ENCODE measurements at regions of chr17 and their contacts with region 1.

Region 1: DNA sequence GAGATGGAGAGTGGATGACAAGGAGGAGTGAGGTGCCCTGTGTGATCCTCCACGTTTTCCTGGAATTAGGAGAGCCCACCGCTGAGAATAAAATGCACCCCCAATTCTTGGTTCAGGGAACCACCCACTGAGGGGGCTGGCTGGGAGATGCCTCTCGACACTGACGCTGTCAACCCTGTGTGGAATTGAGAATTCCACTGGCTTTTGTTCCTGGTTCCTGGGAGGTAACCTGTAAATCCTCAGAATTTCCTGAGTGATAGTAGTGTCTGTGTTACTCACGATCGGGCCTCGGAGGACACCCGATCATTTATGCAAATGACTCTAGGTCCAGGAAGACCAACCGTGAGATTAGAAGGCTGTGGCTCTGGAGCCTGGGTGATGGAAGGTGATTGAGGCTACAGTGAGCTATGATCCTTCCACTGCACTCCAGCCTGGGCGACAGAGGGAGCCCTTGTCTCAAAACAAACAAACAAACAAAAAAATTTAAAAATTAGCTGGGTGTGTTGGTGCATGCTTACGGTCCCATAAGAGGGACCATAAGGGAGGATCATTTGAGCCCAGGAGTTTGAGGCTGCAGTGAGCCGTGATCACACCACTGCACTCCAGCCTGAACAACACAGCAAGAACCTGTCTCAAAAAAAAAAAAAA is 11.7 kb upstream of the PRPSAP1 start:
- DNase-seq: no peak
- H3K4me3 Mint-ChIP-seq: no peak overlapping the region
- H3K27ac Mint-ChIP-seq: no peak overlapping the region
- H3K4me1 Mint-ChIP-seq: peaks cover 2% of the 10 kb centered on the region
- H3K27me3 Mint-ChIP-seq: peaks cover 2% of the 10 kb centered on the region

Region 2: GRCh38 chr17:76353599-76354316 is 11.6 kb before region 1 on chr17 and contains the start of gene PRPSAP1:
- CTCF ChIA-PET with region 1: interaction called, 7 read pairs
- POLR2A ChIA-PET with region 1: interaction called, 18 read pairs
- DNase-seq: peak; percentile 84
- H3K4me3 Mint-ChIP-seq: peak within 1 kb of the TSS; percentile 94
- H3K27ac Mint-ChIP-seq: peak within 1 kb of the TSS; percentile 97
- H3K4me1 Mint-ChIP-seq: peaks cover 30% of the 10 kb centered on the region
- H3K27me3 Mint-ChIP-seq: no peaks in the 10 kb centered on the region
- total RNA-seq, gene PRPSAP1: 59.9 to 66.7 TPM

Measured in activated CD4-positive, alpha-beta memory T cell treated with anti-CD3 and anti-CD28 coated beads, Interleukin-2, amount 10 ng/mL, durations not matched to agents 7 days and 5 days (primary cell).